PC-3 (cell line): ENCODE measurements at regions of chr2 and their contacts with region 1.

Region 1: GRCh38 chr2:43426305-43427031 is 169.4 kb downstream of the THADA start:
- DNase-seq: peak; percentile 98
- ATAC-seq: peak; percentile 96
- H3K4me3 ChIP-seq: 0 out of 2 replicates have a peak overlapping the region, but pooled peaks have one; percentile 13
- H3K27ac ChIP-seq: peak overlapping the region; percentile 93
- H3K4me1 ChIP-seq: peaks cover 60% of the 10 kb centered on the region
- H3K27me3 ChIP-seq: no peaks in the 10 kb centered on the region
- CTCF ChIP-seq: no peak

Region 2: DNA sequence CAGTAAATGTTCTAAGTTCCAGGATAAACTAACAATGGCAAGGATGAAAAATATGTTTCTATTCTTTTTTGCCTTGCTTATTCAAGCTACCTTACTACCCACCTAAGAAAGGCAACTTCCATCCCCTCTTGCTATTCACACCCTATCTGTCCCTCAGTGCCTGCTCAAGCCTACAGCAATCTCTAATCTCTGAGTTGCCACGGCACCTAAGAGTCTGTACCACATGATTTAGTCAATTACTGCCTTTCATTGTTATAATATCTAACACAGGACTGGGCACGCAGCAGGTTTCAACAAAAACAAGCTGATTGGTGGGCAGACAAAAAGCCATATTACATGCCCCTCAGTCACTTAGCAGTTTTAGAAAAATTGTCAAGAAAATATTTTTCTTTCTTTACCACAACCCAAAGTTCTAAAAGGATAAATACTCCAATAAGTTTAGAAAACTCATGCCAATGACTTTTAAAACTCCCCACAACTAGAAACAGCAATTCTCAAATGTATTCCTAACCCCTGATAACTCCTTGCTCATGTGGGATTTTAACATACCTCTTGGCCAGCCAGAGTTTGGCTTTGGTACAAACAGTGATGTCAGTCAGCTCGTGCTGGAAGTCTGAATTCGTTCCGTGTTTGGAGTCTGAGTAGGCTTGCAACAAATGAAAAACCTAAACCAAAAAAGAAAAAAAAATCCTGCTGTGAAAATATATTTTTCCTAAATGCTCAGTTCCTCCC is 82.7 kb before region 1 on chr2:
- CTCF ChIA-PET with region 1: no interaction called
- POLR2A ChIA-PET with region 1: no interaction called
- intact Hi-C with region 1: loop called (anchors 1 kb)
- DNase-seq: no peak
- ATAC-seq: no peak
- H3K4me3 ChIP-seq: no peak overlapping the region
- H3K27ac ChIP-seq: no peak overlapping the region
- H3K4me1 ChIP-seq: peaks cover 23% of the 10 kb centered on the region
- H3K27me3 ChIP-seq: no peaks in the 10 kb centered on the region
- CTCF ChIP-seq: no peak

Region 3: DNA sequence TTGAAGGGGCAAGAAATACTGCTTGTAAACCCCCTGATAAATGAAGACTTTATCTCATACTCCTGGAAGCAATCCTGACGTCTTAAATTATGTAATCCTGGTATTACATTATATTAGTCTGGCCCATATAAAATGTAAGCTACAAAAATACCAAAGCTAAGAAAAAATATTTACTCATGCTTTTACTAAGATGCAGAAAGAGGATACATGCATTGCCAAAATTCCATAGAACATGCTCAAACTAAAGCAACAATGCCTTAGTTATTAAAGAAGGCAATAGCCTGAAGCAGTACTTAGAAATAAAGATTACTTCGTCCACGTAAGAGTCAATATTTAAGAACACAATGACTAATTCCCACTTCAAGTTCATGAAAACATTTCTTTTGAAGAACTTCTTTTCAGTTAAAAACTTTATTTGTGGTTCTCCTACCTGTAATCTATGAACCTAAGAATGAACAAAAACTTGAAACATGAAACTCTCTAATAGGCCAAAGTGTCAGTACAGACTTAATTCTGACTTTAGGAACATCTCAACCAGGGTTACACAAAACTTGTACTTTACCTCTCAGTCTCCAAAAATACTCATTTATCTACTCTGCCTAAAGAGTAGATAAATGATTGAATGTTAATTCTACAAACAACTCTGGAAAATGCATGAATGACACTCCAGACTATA is 52.1 kb after region 1 on chr2:
- CTCF ChIA-PET with region 1: no interaction called
- POLR2A ChIA-PET with region 1: no interaction called
- intact Hi-C with region 1: loop called (anchors 1 kb)
- DNase-seq: peak; percentile 93
- ATAC-seq: peak; percentile 98
- H3K4me3 ChIP-seq: no peak overlapping the region
- H3K27ac ChIP-seq: peak overlapping the region; percentile 67
- H3K4me1 ChIP-seq: peaks cover 33% of the 10 kb centered on the region
- H3K27me3 ChIP-seq: no peaks in the 10 kb centered on the region
- CTCF ChIP-seq: no peak